Heart left ventricle (tissue), 16 donors: ENCODE measurements at regions of chr11 and their contacts with region 1.

Region 1: GRCh38 chr11:117985953-117986887 is at the start of gene IL10RA:
- DNase-seq: peak; percentile 78 to 95 (median 87)
- ATAC-seq: peak; percentile 85 to 99 (median 98)
- H3K4me3 ChIP-seq: peak within 1 kb of the TSS; percentile 17 to 85 (median 56)
- H3K27ac ChIP-seq: peak within 1 kb of the TSS in 11 of 12 donors; percentile 3 to 99 (median 59)
- H3K4me1 ChIP-seq: peaks cover 0 to 57% (median 9%) of the 10 kb centered on the region in 12 donors
- H3K27me3 ChIP-seq: peaks cover 0 to 16% (median 3%) of the 10 kb centered on the region in 9 donors
- CTCF ChIP-seq: no peak
- POLR2A ChIP-seq: peak in 1 of 2 donors; percentile 77
- total RNA-seq, gene IL10RA: 2.1 to 49.0 (median 6.3) TPM

Region 2: DNA sequence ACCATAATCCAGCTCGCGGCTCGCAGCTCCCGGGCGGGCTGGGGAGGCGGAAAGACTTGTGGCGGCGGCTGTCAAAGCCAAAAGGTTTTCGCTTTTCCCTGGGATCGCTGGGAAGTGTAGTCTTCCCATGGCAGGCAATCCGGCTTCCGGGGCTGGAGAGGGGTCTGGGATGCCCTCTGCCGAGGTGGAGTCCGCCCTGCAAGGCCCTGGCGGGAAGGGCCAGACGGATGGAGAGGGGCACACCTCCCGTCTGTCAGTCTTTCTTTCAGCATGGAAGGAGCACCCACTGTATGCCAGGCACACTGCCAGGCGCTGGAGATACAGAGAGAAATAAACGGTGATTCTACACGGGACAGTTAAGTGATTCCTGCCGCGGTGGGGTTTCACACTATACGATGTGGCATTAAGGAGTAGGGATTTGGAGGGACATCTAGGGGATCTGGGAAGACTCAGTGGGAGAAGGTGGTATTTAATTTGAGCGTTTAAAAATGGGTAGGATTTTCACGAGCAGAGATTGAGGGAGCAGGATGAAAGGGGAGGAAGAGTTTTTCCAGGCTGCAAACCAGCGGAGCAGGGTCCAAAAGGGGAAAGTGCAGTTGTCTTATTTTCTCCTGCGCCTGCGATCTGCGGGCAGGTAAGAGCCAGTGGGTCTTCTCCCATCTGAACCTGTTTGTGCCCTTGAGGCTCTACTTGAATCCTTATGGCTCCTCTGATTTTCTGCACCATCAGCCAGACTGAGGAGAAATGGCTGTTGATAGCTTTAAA is 669.8 kb before region 1 on chr11 and contains the start of gene BACE1:
- intact Hi-C with region 1: no loop called
- DNase-seq: peak; percentile 88 to 92 (median 89)
- ATAC-seq: peak; percentile 90 to 98 (median 96)
- H3K4me3 ChIP-seq: peak within 1 kb of the TSS; percentile 78 to 99 (median 91)
- H3K27ac ChIP-seq: peak within 1 kb of the TSS in 11 of 12 donors; percentile 26 to 76 (median 63)
- H3K4me1 ChIP-seq: peaks cover 0 to 28% (median 19%) of the 10 kb centered on the region in 12 donors
- H3K27me3 ChIP-seq: no peaks in the 10 kb centered on the region
- CTCF ChIP-seq: peak in 9 of 12 donors; percentile 19 to 68 (median 44)
- POLR2A ChIP-seq: peak in 1 of 2 donors; percentile 58
- total RNA-seq, gene BACE1: 12.7 to 21.4 (median 17.3) TPM

Region 3: DNA sequence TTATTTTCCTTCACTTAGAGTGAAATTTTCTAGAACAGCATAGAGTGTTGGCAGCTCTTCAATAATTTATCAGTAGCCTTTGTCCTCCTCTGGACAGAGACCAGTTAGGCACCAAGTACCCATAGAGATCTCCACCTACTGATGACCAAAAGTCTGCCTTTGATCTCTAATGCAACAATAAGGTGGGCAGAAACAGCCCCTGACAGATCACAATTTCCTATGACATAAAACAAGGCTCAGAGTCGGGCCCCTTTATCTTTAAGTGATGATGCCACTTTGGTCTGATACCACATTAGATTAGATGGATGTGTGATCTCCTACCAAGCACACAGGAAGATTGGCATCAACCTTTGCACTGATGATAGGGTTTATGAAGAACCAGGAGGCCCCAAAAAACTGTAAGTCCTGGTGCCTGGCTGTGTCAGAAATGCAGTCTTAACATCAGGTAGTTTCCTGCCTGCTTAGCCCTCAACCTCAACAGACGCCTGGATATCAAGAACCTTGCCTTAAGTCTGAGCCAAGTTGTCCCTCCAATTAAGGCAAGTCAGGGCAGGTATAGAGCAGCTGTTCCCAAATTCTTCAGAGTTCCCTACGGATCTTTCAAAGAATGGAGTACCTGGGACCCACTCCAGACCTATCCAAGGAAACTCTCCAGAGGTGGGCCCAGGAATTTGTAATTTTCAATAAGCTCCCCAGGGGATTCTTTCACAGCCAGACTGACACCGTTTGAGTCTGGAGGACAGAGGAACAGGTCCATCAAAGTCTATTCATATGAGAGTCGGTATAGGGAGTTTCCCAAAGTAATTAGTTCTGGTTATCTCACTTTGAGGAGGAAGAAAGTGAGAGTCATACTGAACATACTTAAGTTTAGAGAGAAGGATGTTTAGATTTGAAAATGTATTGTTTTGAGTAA is 60.1 kb after region 1 on chr11:
- intact Hi-C with region 1: loop called in 1 of 10 experiments (anchors 10 kb)
- DNase-seq: no peak
- ATAC-seq: no peak
- H3K4me3 ChIP-seq: no peak overlapping the region
- H3K27ac ChIP-seq: peak overlapping the region in 1 of 12 donors; percentile 76
- H3K4me1 ChIP-seq: peaks cover 0 to 16% (median 0%) of the 10 kb centered on the region in 12 donors
- H3K27me3 ChIP-seq: peaks cover 0 to 3% (median 0%) of the 10 kb centered on the region in 9 donors
- CTCF ChIP-seq: no peak
- POLR2A ChIP-seq: no peak